Transverse colon (tissue), 4 donors: ENCODE measurements at regions of chr4 and their contacts with region 1.

Region 1: GRCh38 chr4:157220371-157220881 is at the start of gene GRIA2:
- DNase-seq: no peak
- H3K4me3 ChIP-seq: peak within 1 kb of the TSS in 1 of 4 donors; percentile 27
- H3K27ac ChIP-seq: no peak within 1 kb of the TSS
- H3K4me1 ChIP-seq: peaks cover 0 to 7% (median 0%) of the 10 kb centered on the region in 4 donors
- H3K27me3 ChIP-seq: peaks cover 64% of the 10 kb centered on the region
- CTCF ChIP-seq: no peak
- EP300 ChIP-seq: no peak
- POLR2A ChIP-seq: no peak
- total RNA-seq, gene GRIA2: 0.14 to 10.1 TPM in 2 of 4 donors, not detected in the others

Region 2: GRCh38 chr4:157242871-157243270 is 22.4 kb after region 1 on chr4:
- in situ Hi-C with region 1: no loop called
- intact Hi-C with region 1: no loop called
- DNase-seq: no peak
- H3K4me3 ChIP-seq: no peak overlapping the region
- H3K27ac ChIP-seq: no peak overlapping the region
- H3K4me1 ChIP-seq: no peaks in the 10 kb centered on the region
- H3K27me3 ChIP-seq: no peaks in the 10 kb centered on the region
- CTCF ChIP-seq: no peak
- EP300 ChIP-seq: no peak
- POLR2A ChIP-seq: no peak

Region 3: GRCh38 chr4:157634057-157634456 is 413.6 kb after region 1 on chr4:
- in situ Hi-C with region 1: no loop called
- intact Hi-C with region 1: loop called (anchors 5 kb)
- DNase-seq: no peak
- H3K4me3 ChIP-seq: no peak overlapping the region
- H3K27ac ChIP-seq: no peak overlapping the region
- H3K4me1 ChIP-seq: no peaks in the 10 kb centered on the region
- H3K27me3 ChIP-seq: no peaks in the 10 kb centered on the region
- CTCF ChIP-seq: no peak
- EP300 ChIP-seq: no peak
- POLR2A ChIP-seq: no peak

Region 4: DNA sequence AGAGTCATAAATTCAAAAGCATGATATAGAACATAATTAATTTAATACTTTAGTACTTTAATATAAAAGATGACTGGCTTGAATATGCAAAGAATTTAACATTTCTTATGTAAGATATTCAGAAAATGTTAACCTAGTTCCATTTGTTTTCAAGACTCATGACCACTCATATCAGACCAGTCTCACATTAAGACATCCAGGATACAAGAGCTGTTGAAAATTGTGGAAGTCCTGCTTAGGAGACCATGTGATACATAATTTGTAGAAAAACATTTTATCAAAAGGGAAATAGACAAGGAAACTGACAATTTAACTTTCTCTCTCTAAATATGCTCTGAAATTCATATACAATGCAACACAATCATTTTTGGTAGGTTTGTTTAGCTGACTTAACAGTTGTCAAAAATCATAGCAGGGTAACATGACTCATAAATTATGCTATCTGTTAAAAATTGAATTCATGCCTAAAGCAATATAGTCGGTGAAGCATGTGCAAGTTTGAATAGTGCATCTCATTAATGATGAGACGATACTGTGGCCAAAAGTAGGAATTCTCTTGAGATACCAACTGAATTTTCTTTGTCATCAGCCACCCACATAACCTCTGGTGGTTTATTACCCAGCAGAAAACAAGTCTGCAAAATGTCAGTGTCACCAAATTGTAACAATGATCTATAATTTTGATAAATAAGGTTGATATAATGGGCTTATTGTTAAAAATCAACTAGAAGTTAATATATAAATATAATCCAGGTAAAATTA is 741.0 kb after region 1 on chr4:
- in situ Hi-C with region 1: loop called in 1 of 4 experiments (anchors 25 kb)
- intact Hi-C with region 1: no loop called
- DNase-seq: no peak
- H3K4me3 ChIP-seq: no peak overlapping the region
- H3K27ac ChIP-seq: no peak overlapping the region
- H3K4me1 ChIP-seq: no peaks in the 10 kb centered on the region
- H3K27me3 ChIP-seq: no peaks in the 10 kb centered on the region
- CTCF ChIP-seq: no peak
- EP300 ChIP-seq: no peak
- POLR2A ChIP-seq: no peak

Region 5: GRCh38 chr4:157978680-157979361 is 758.4 kb after region 1 on chr4:
- in situ Hi-C with region 1: loop called in 3 of 4 experiments (anchors 10 to 25 kb)
- intact Hi-C with region 1: no loop called
- DNase-seq: peak; percentile 8
- H3K4me3 ChIP-seq: peak overlapping the region in 1 of 4 donors; percentile 1
- H3K27ac ChIP-seq: no peak overlapping the region
- H3K4me1 ChIP-seq: peaks cover 0 to 7% (median 0%) of the 10 kb centered on the region in 4 donors
- H3K27me3 ChIP-seq: no peaks in the 10 kb centered on the region
- CTCF ChIP-seq: peak; percentile 74 to 85 (median 82)
- EP300 ChIP-seq: no peak
- POLR2A ChIP-seq: no peak